WTC11 (cell line): ENCODE measurements at regions of chr6 and their contacts with region 1.

Region 1: DNA sequence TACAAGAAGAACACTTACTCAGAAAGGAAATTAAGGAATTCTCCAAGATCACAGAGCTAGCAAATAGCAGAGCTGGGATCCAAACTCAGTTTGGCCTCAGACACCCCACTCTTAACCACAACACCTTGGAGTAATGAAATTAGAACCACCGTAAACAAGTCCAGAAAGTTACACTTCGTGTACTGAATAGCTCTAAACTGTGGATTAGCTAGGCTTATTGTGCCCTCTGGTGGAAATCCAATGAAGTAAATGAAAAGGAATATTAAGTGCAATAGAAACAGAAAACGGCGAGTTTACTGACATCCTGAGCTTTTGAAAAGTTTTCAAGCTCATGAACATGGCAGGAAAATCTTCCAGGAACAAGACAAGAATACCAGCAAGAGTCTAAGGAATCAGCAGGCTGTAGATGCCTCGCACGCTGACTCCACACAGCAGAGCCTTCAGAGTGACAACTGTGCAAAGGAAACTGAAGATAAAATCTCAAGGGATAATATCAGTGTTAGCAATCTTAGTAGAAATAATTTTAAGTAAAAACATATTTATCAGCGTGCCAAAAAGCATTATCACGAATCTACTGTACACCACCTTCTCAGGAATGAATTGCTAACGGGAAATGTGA is 34.6 kb downstream of the FBXO5 start:
- DNase-seq: no peak
- ATAC-seq: peak; percentile 70
- H3K4me3 Mint-ChIP-seq: no peak overlapping the region
- H3K27ac Mint-ChIP-seq: no peak overlapping the region; the same call in 1 of the 2 replicates
- H3K4me1 Mint-ChIP-seq: peaks cover 35% of the 10 kb centered on the region
- H3K27me3 Mint-ChIP-seq: no peaks in the 10 kb centered on the region
- CTCF ChIP-seq: peak; percentile 48

Region 2: GRCh38 chr6:152727525-152727924 is 220.7 kb before region 1 on chr6:
- CTCF ChIA-PET with region 1: interaction called, 13 read pairs
- POLR2A ChIA-PET with region 1: no interaction called
- DNase-seq: no peak
- ATAC-seq: peak; percentile 83
- H3K4me3 Mint-ChIP-seq: no peak overlapping the region
- H3K27ac Mint-ChIP-seq: no peak overlapping the region
- H3K4me1 Mint-ChIP-seq: peaks cover 7% of the 10 kb centered on the region
- H3K27me3 Mint-ChIP-seq: no peaks in the 10 kb centered on the region
- CTCF ChIP-seq: no peak

Region 3: DNA sequence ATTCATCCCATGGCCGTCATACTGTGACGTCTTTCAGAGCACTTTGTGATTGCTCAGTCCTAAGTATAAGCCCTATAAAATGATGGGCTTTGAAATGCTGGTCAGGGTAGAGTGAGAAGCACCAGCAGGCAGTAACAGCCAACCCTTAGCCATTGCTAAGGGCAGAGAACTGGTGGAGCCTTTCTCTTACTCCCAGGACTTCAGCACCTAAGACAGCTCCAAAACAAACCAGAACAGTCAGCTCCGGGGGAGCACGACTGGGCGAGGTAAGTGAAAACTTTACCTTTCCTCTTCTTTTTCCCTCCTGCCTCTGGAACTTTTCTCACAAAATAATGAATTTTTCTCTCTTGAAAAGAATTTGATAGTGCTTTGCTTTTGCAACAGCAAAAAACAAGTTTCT is 197.6 kb before region 1 on chr6 and contains the start of gene VIP:
- CTCF ChIA-PET with region 1: interaction called, 29 read pairs
- POLR2A ChIA-PET with region 1: no interaction called
- DNase-seq: peak; percentile 47
- ATAC-seq: peak; percentile 100
- H3K4me3 Mint-ChIP-seq: no peak within 1 kb of the TSS
- H3K27ac Mint-ChIP-seq: no peak within 1 kb of the TSS
- H3K4me1 Mint-ChIP-seq: peaks cover 11% of the 10 kb centered on the region
- H3K27me3 Mint-ChIP-seq: no peaks in the 10 kb centered on the region
- CTCF ChIP-seq: no peak
- total RNA-seq, gene VIP: not detected in 3 replicates

Region 4: GRCh38 chr6:152863618-152864326 is 84.5 kb before region 1 on chr6:
- CTCF ChIA-PET with region 1: interaction called, 14 read pairs
- POLR2A ChIA-PET with region 1: no interaction called
- DNase-seq: peak; percentile 54
- ATAC-seq: peak; percentile 87
- H3K4me3 Mint-ChIP-seq: no peak overlapping the region
- H3K27ac Mint-ChIP-seq: no peak overlapping the region
- H3K4me1 Mint-ChIP-seq: no peaks in the 10 kb centered on the region; the same call in 1 of the 2 replicates
- H3K27me3 Mint-ChIP-seq: no peaks in the 10 kb centered on the region
- CTCF ChIP-seq: peak; percentile 64